AG04449 (cell line): ENCODE measurements at regions of chr2 and their contacts with region 1.

Region 1: DNA sequence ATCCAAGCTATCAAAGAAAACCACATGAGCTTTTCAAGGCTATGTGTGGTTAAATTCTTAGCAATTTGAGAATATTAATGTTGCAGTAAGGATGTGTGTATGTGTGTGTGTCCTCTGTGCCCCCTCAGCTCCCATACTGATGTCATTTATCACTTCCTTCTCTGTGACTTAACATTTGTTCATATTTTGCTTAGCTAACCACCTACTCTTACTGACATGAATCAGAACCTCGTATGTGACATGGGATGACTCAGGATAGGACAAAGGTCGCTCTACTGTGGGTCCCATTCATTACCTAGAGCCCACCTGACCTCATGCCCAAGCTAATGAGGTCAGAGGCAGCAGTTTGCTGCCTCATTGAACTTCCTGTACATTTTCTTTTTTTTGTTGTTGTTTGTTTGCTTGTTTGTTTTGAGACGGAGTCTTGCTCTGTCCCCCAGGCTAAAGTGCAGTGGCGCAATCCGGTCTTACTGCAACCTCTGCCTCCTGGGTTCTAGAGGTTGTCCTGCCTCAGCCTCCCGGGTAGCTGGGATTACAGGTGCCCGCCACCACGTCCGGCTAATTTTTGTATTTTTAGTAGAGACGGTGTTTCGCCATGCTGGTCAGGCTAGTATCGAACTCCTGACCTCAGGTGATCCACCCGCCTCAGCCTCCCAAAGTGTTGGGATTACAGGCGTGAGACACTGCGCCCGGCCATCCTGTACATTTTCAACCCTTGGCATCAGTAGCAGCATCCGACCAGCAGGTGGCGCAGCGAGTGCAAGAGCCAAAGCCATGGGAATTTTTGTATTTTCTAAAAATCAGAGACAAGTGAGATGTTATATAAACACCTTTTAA is 36.4 kb downstream of the MOGAT1 start:
- DNase-seq: peak; percentile 77
- H3K4me3 ChIP-seq: no peak overlapping the region
- CTCF ChIP-seq: peak; percentile 83

Region 2: GRCh38 chr2:222468346-222468745 is 239.6 kb before region 1 on chr2:
- CTCF ChIA-PET with region 1: no interaction called
- POLR2A ChIA-PET with region 1: no interaction called
- DNase-seq: no peak
- H3K4me3 ChIP-seq: no peak overlapping the region
- CTCF ChIP-seq: no peak

Region 3: DNA sequence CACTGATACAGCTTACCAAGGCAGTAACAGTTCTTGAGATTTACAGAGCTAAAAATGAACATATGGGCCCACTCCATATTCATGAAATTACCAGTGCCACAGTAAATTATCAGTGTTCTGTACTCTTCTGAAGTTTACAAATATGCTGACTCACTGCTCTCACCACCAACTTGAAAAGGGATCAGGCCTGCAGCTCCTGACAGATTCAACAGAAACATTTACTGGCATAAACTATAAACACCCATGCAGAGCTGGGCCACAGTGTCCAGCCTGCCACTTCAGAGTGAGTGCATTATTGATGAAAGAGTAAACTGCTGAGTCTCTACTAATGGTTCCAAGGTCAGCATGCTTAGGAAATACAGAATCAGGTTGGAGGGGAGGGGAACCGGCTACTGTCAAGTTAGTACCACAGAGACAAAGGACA is 135.1 kb before region 1 on chr2:
- CTCF ChIA-PET with region 1: no interaction called
- POLR2A ChIA-PET with region 1: no interaction called
- DNase-seq: no peak
- H3K4me3 ChIP-seq: no peak overlapping the region
- CTCF ChIP-seq: no peak

Region 4: GRCh38 chr2:222722327-222722946 is 14.5 kb after region 1 on chr2:
- CTCF ChIA-PET with region 1: interaction called, 11 read pairs
- POLR2A ChIA-PET with region 1: no interaction called
- DNase-seq: peak; percentile 57
- H3K4me3 ChIP-seq: no peak overlapping the region
- CTCF ChIP-seq: no peak

Region 5: GRCh38 chr2:222860740-222861410 is 153.0 kb after region 1 on chr2 and contains the start of gene ACSL3:
- CTCF ChIA-PET with region 1: interaction called, 45 read pairs
- POLR2A ChIA-PET with region 1: interaction called, 7 read pairs
- DNase-seq: no peak
- H3K4me3 ChIP-seq: peak within 1 kb of the TSS; percentile 77
- CTCF ChIP-seq: no peak

Region 6: DNA sequence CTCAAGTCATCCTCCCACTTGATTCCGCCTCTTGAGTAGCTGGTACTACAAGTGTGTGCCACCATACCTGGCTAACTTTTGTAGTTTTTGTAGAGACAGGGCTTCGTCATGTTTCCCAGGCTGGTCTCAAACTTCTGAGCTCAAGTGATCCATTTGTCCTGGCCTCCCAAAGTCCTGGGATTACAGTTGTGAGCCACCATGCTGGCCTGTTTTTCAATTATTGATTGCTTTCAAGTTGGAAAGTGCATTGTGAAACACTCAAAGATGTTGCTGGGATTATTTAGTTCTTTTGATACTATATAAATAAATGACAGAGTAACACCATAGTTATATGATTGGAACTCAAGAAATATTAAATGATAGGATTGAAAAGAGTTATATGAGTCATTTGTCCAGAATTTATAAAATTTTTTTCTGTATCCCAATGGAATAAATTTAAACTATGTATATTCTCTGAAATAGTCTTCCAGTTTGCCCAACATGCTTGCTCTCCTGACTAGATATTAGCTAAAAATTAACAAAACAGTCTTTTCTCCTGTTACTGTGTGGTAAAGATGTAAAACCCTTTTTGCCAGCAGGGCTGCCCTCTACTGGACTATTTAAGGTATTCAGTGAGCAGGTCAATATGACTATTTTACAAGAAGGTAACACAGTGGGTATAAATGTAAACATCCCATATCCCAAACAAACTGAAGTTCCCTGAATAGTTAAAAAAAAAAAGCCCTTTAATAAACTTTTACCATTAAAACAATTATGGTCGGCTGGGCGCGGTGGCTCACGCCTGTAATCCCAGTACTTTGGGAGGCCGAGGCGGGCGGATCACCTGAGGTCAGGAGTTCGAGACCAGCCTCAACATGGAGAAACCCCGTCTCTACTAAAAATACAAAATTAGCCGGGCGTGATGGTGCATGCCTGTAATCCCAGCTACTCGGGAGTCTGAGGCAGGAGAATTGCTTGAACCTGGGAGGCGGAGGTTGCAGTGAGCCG is 195.6 kb after region 1 on chr2:
- CTCF ChIA-PET with region 1: interaction called, 134 read pairs
- POLR2A ChIA-PET with region 1: no interaction called
- DNase-seq: no peak
- H3K4me3 ChIP-seq: no peak overlapping the region
- CTCF ChIP-seq: peak; percentile 50

Region 7: DNA sequence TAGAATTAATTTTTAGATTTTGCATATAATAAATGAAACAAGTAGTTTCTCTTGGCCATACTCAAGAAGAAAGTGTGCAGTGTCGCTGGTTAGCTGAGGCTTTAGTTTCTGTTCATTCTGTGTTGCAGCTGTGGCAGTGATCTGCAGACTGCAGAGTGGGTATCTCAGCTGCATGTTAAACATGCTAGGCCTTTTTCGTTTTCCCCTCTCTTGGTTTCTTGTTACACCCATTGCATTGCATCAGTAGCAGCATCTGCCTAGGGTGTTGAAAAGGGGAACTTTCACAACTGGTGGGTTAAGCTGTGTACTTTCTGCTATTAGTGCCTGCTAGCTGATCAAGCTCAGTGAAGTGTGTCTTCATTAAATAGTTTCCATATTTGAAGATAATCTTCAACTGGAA is 204.2 kb after region 1 on chr2:
- CTCF ChIA-PET with region 1: interaction called, 38 read pairs
- POLR2A ChIA-PET with region 1: interaction called, 4 read pairs
- DNase-seq: no peak
- H3K4me3 ChIP-seq: no peak overlapping the region
- CTCF ChIP-seq: no peak

Region 8: GRCh38 chr2:222939208-222939856 is 231.4 kb after region 1 on chr2:
- CTCF ChIA-PET with region 1: interaction called, 23 read pairs
- POLR2A ChIA-PET with region 1: no interaction called
- DNase-seq: no peak
- H3K4me3 ChIP-seq: no peak overlapping the region
- CTCF ChIP-seq: peak; percentile 72

Region 9: GRCh38 chr2:222959336-222959735 is 251.4 kb after region 1 on chr2:
- CTCF ChIA-PET with region 1: interaction called, 23 read pairs
- POLR2A ChIA-PET with region 1: no interaction called
- DNase-seq: peak; percentile 66
- H3K4me3 ChIP-seq: no peak overlapping the region
- CTCF ChIP-seq: peak; percentile 75

Region 10: GRCh38 chr2:222982010-222982908 is 274.4 kb after region 1 on chr2:
- CTCF ChIA-PET with region 1: no interaction called
- POLR2A ChIA-PET with region 1: no interaction called
- DNase-seq: peak; percentile 71
- H3K4me3 ChIP-seq: no peak overlapping the region
- CTCF ChIP-seq: peak; percentile 75